ENCODE measurements at regions of chr1 and their contacts with region 1.

Region 1: GRCh38 chr1:74689621-74690363 is 16.2 kb upstream of the ERICH3 start:
- DNase-seq: peak; percentile 18
- CTCF ChIP-seq: peak; percentile 84

Region 2: DNA sequence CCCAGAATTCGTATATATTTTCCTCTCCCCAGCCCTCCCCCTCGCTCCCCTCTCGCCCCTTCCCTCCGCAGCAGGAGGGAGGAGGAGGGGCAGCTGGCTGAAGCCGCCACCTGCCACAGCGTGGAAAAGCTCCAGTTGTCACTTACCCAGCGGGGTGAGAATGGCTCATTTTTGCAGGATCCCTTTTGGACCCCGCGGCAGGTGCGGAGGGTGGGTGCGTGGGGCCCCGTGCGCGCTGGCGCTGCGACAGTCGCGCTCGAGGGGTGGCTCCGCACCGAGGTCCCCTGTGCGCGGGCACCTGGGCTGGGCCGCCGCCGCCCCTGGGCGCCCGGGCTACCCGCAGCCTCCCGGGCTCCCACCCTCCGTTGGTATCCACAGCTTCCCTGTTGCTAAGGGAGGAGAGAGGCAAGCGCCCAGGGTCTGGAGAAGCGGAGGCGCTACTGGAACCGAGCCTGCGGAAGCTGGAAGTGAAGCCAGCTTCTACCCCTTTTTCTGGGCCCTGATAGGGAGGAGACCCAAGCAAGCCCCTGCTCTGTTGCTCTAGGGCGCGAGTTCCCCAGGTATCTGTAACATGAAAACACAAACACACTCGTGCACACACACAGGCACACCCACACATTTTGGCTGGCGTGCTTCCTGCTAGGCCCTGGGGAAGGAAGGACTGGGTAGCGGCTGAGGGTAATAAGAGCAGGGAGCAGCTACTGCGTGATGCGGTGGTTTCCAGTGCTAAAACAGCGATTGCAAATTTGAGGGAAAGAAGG is 16.3 kb before region 1 on chr1 and contains the start of gene ERICH3:
- CTCF ChIA-PET with region 1: interaction called, 32 read pairs
- POLR2A ChIA-PET with region 1: no interaction called
- DNase-seq: peak; percentile 18
- CTCF ChIP-seq: no peak

Measured in GM10248 (cell line).